Right cardiac atrium (tissue), 5 donors: ENCODE measurements at regions of chrX and their contacts with region 1.

Region 1: DNA sequence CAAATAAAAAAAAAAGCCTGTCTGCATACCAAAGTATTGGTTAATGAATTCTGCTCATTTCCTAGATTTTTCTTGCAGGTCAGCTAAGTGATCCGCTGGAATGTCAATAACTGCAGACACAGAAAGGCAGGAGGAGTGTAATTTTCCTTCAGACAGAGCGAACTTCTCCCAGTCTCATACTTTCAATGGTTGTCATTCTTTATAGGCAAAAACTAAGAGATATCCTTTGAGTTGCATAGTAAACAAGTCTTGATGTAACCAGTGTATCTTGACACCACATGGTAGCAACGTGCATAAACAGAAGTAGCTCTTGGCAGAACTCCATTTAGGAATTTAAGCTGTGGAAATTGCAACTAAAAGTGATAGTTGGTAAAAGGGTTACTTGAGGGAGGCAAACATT is 8.2 kb downstream of the CAPN6 start:
- DNase-seq: no peak
- ATAC-seq: no peak
- H3K4me3 ChIP-seq: no peak overlapping the region
- H3K27ac ChIP-seq: no peak overlapping the region
- H3K4me1 ChIP-seq: no peaks in the 10 kb centered on the region
- H3K27me3 ChIP-seq: no peaks in the 10 kb centered on the region

Region 2: GRCh38 chrX:110987292-110987691 is 274.8 kb before region 1 on chrX:
- intact Hi-C with region 1: no loop called
- DNase-seq: no peak
- ATAC-seq: no peak
- H3K4me3 ChIP-seq: no peak overlapping the region
- H3K27ac ChIP-seq: no peak overlapping the region
- H3K4me1 ChIP-seq: no peaks in the 10 kb centered on the region
- H3K27me3 ChIP-seq: no peaks in the 10 kb centered on the region

Region 3: GRCh38 chrX:111445486-111445885 is 183.4 kb after region 1 on chrX:
- intact Hi-C with region 1: loop called in 1 of 4 experiments (anchors 10 kb)
- DNase-seq: no peak
- ATAC-seq: peak in 1 of 2 donors; percentile 25
- H3K4me3 ChIP-seq: no peak overlapping the region
- H3K27ac ChIP-seq: no peak overlapping the region
- H3K4me1 ChIP-seq: no peaks in the 10 kb centered on the region
- H3K27me3 ChIP-seq: no peaks in the 10 kb centered on the region